ENCODE measurements at regions of chr22 and their contacts with region 1.

Region 1: GRCh38 chr22:29040385-29041275 is 21.0 kb downstream of the C22orf31 start:
- DNase-seq: peak; percentile 44 to 70
- H3K4me3 ChIP-seq: no peak overlapping the region
- H3K27ac ChIP-seq: no peak overlapping the region
- H3K4me1 ChIP-seq: peaks cover 22% of the 10 kb centered on the region
- H3K27me3 ChIP-seq: no peaks in the 10 kb centered on the region
- CTCF ChIP-seq: peak; percentile 98

Region 2: DNA sequence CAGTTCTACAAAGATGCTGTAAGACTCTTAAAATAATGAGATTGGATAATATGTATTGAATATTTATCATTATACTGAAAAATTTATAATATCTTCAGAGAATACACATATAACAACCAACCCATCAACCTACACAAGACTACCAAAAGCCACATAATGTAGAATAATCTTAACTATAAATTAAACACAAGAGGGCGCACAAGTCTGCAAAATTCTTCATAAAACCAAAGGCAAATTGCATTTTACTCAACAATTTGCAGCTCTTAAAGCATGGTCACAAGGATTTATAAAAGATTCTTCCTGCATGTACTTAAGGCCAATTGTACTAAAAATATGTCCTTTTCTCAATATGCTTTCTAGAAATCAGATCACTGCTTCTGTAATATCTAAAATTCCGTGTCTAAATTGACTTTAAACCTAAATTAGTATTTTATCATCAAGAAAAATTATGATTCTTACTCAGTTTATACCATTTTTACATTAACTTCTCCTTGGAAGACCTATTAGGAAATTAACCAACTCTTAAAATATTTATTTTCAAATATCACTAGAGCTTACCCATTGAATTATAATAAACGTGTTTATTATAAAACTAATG is 440.0 kb before region 1 on chr22:
- CTCF ChIA-PET with region 1: no interaction called
- POLR2A ChIA-PET with region 1: no interaction called
- intact Hi-C with region 1: loop called (anchors 2 kb)
- DNase-seq: peak in 1 of 2 experiments; percentile 40
- H3K4me3 ChIP-seq: no peak overlapping the region
- H3K27ac ChIP-seq: no peak overlapping the region
- H3K4me1 ChIP-seq: no peaks in the 10 kb centered on the region
- H3K27me3 ChIP-seq: no peaks in the 10 kb centered on the region
- CTCF ChIP-seq: peak; percentile 78

Region 3: DNA sequence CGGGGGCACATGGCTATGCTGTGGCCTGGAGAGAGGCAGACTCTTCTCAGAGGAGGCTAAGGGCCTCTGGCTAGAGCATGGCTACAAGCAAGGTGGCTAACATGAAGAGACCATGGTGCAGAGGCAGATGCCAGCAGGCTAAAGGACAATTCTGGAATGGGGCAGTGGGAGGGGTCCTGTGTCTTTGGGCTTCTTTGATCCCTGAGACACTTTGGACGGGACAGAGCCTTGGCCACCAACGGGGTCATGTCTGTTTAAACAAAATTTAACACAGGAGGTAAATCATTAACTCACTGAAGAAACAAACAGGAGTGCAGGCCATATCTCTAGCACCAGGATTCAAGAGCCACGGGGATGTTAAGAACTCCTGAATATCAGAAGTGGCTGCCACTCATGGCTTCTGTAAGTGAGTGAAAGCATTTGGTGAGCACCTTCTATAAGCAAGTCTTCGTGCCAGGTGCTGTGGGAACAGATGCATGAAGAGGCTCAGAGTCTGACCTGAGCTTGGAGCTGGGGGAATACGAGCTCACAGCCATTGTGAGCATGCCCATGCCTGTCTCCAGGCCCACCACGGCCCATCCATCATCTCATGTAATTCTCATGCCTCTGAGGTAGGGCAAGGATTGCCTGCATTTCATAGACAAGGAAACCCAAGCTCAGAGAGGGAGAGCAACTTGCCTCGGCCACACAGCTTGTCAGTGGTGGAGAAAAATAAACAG is 175.6 kb before region 1 on chr22:
- CTCF ChIA-PET with region 1: interaction called, 14 read pairs
- POLR2A ChIA-PET with region 1: no interaction called
- intact Hi-C with region 1: no loop called
- DNase-seq: no peak
- H3K4me3 ChIP-seq: no peak overlapping the region
- H3K27ac ChIP-seq: no peak overlapping the region
- H3K4me1 ChIP-seq: no peaks in the 10 kb centered on the region
- H3K27me3 ChIP-seq: no peaks in the 10 kb centered on the region
- CTCF ChIP-seq: no peak

Region 4: DNA sequence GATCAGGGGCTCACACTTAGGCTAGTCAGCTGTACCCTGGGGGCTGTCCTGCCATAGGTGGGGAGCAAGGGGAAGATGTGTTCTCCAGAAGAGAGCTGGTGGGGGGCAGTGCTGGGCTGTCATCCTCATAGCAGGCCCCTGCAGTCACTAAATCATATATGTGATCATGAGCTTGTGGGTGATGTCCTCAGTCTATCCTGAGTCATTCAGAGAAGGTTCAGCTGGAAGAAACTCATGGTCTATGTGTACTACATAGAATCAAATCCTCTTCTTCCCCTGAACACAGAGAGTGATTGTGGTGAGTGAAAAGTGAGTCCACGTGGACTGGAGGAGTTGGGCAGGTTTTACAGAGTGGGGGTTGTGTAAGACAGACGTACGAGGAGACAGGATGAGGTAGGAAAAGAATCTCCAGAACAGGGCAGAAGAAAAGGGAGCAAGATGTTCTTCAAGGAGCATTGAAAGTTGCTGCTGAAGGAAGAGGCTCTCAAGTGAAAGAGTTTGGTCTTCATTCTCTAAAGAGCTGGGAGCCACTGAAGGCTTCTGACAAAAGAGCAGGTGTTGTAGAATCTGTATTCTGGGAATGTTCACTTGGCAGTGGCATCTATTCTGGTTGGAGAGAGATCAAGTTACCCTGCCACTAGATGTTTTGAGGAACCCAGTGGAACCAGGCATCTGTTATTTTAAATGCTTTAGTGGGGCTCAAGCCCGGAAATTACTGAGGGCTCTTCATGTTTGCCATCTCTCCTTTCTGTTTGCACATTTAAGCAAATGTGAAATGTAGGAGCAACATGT is 47.9 kb before region 1 on chr22:
- CTCF ChIA-PET with region 1: interaction called, 11 read pairs
- POLR2A ChIA-PET with region 1: no interaction called
- intact Hi-C with region 1: no loop called
- DNase-seq: no peak
- H3K4me3 ChIP-seq: no peak overlapping the region
- H3K27ac ChIP-seq: no peak overlapping the region
- H3K4me1 ChIP-seq: no peaks in the 10 kb centered on the region
- H3K27me3 ChIP-seq: no peaks in the 10 kb centered on the region
- CTCF ChIP-seq: no peak

Region 5: DNA sequence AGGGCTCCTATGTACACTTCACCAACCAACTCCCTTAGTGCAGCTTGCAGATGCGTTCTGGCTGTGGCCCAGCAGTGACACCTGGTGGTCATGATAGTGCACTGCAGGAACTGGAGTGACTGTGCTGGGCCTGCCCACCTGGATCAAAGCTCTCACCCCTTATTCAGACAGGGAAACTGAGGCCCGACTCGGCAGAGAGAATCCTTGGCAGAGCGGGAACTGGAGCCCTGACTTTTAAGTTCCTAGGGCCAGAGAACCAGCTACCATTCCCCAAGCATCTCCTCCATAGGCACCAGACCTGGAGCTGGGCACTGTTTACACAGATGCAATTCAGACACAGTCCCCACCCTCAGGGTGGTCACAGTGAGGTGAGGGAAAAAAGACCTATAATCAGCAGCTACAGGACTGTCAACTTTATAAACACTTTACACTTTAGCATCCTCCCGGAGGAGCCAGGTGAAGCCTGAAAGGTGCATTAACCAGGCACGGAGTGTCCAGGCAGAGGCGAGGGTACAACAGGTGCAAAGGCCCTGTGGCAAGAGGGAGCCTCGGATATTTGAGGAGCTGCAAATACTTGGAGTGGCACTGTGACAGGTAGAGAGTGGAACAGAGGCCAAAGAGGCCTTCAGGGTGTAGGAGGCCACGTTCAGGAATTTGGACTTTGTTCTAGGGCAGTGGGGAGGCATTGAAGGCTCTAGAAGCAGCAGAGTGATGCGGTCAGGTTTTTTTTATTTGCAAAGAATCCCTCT is 205.2 kb after region 1 on chr22:
- CTCF ChIA-PET with region 1: no interaction called
- POLR2A ChIA-PET with region 1: interaction called, 3 read pairs
- intact Hi-C with region 1: loop called (anchors 5 kb)
- DNase-seq: peak in 1 of 2 experiments; percentile 52
- H3K4me3 ChIP-seq: no peak overlapping the region
- H3K27ac ChIP-seq: no peak overlapping the region
- H3K4me1 ChIP-seq: no peaks in the 10 kb centered on the region
- H3K27me3 ChIP-seq: 0 out of 2 replicates have a peak, but pooled peaks cover 4% of the 10 kb centered on the region
- CTCF ChIP-seq: peak; percentile 97